ENCODE measurements at regions of chr16 and their contacts with region 1.

Region 1: GRCh38 chr16:30957456-30958174 is at the start of gene SETD1A:
- DNase-seq: peak; percentile 99
- ATAC-seq: peak; percentile 95
- total RNA-seq, gene SETD1A: 9.4 TPM

Region 2: GRCh38 chr16:31032736-31033708 is 75.4 kb after region 1 on chr16 and contains the start of gene STX4:
- intact Hi-C with region 1: loop called (anchors 5 kb)
- DNase-seq: peak; percentile 99
- ATAC-seq: peak; percentile 95
- total RNA-seq, gene STX4: 42.3 TPM

Region 3: GRCh38 chr16:31873556-31874365 is 916.1 kb after region 1 on chr16 and contains the start of gene ZNF267:
- intact Hi-C with region 1: loop called (anchors 10 kb)
- DNase-seq: peak; percentile 96
- ATAC-seq: peak; percentile 96
- total RNA-seq, gene ZNF267: 6.6 TPM